OCI-LY7 (cell line): ENCODE measurements at regions of chr11 and their contacts with region 1.

Region 1: DNA sequence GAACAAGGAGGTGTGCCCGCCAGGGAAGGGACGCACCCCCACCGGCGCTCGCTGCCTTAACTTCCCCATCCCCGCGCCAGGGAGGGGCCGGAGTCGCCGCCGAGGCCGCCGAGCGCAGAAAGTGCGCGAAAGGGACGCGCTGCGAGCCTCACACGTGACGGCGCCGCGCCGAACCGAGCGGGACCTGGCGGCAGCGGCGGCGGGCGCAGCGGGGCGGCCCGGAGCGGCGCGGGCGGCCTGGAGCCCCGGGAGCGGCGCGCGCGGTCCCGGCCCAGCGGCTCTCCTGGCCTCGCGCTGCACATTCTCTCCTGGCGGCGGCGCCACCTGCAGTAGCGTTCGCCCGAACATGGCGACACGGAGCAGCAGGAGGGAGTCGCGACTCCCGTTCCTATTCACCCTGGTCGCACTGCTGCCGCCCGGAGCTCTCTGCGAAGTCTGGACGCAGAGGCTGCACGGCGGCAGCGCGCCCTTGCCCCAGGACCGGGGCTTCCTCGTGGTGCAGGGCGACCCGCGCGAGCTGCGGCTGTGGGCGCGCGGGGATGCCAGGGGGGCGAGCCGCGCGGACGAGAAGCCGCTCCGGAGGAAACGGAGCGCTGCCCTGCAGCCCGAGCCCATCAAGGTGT is at the start of gene SORL1:
- DNase-seq: peak; percentile 86
- H3K4me3 ChIP-seq: peak within 1 kb of the TSS; percentile 89
- H3K27ac ChIP-seq: peak within 1 kb of the TSS; percentile 97
- H3K4me1 ChIP-seq: peaks cover 73% of the 10 kb centered on the region
- CTCF ChIP-seq: peak; percentile 67
- total RNA-seq, gene SORL1: 219 and 228 TPM in 2 replicates

Region 2: DNA sequence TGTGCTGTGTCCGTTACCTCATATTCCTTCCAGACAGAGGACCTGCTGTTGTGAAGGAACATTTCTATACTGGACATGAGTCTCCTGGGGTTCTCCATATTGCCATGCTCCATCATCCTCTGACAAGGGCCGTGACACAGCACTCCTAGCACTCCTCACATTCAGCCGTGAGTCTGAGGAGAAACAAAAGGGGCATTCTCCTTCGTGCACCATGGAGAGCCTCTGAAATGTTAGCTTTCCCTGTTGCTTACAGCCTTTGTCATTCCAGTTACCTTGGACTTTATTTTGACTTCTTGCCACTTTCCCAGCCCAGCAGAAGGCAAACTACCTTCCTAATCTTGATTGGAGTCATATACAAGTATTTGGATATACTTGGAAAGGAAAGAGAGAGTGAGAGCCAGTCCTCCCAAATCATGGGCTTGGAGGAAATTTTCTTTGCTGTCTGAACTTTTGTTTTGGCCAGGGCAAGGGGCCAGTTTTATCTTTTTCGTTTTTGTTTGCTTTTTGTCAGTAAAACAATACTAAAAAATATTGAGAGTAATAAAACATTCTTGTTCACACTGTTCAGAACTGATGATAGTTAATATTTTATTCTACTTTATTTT is 380.1 kb before region 1 on chr11:
- CTCF ChIA-PET with region 1: no interaction called
- POLR2A ChIA-PET with region 1: no interaction called
- intact Hi-C with region 1: no loop called
- DNase-seq: no peak
- H3K4me3 ChIP-seq: no peak overlapping the region
- H3K27ac ChIP-seq: no peak overlapping the region
- H3K4me1 ChIP-seq: peaks cover 6% of the 10 kb centered on the region
- CTCF ChIP-seq: no peak

Region 3: DNA sequence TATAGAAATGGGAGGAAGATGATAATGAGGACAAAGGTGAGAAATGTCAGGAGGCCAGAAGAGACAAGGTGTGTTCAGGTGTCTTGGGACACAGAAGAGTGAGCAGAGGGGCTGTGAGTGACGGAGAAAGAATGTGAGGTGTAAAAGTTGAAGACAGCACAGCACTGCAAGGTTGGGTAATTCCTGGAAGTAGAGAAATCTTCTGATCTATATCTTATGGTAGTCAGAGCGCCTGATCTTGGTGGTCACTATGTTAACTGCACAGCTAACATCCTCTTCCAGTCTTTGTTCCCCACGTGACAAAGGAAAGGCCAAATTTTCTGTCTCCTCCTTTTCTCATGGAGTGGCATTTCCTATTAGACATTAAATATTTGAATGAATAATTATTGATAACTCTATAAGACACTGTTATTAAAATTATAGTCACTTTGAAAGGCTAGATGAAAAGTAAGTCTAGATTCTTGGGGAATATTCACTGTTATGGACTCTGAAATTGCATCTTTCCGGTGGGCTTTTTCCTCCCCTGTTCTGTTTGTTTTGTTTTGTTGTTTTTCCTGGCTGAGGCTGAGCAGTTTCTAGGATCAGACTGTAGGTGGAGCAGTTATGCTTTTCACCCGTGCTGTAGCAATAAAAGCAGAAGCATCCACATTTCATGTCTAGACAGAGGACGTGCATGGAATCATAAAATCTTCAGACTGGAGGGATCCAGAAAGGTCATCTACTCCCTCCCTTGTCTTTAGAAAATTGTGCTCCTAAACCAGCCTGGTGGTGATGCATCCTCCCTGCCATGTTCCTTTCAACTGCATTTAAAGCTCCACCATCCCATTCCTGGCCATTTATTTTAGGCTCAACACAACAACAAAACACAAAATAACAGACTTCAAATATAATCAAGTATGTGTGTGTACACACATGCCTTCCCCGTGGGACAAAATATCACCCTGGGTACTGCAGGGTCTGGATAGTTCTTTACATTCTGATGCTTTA is 133.0 kb before region 1 on chr11:
- CTCF ChIA-PET with region 1: no interaction called
- POLR2A ChIA-PET with region 1: interaction called, 4 read pairs
- intact Hi-C with region 1: loop called (anchors 1 kb)
- DNase-seq: peak; percentile 82
- H3K4me3 ChIP-seq: no peak overlapping the region
- H3K27ac ChIP-seq: peak overlapping the region; percentile 1
- H3K4me1 ChIP-seq: peaks cover 58% of the 10 kb centered on the region
- CTCF ChIP-seq: peak; percentile 99

Region 4: DNA sequence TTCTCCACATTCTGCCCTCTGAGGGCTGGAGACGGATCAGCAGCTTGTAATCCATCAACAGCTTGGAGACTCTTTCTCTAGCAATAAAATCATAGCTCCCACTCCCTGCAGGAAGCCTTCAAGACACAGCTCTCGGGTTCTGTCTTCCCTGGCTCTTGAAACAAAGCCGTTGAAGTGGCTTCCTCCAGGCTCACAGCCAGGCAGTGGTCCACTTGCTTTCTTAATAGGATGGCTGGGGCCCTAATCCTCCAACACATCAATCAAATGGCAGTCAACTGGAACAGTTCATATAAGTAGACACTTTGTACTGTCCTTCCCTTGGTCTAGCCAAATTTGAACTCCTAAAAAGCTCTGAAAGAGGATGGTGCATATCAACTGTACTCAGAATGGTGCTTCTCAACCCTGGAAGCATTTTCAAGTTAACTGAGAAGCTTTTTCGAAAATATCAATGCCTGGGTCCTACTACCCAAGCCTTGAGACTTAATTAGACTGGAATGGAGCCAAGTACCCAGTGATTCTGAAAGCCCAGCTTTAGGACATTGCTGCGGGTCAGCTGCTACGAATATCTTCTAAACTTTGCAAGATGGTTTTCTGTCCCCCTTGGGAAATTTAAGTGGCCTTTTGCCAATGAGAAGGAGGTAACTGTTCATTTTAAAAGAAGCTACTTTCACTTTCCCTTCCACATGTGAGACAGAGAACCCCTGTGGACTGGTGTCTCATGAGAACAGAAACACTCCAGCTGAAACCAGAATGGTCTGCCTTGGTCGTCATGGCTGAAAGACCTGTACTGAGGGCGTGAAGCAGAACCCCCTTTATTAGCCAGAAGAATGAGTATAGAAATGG is 84.9 kb before region 1 on chr11:
- CTCF ChIA-PET with region 1: no interaction called
- POLR2A ChIA-PET with region 1: interaction called, 153 read pairs
- intact Hi-C with region 1: loop called (anchors 1 kb)
- DNase-seq: peak; percentile 95
- H3K4me3 ChIP-seq: peak overlapping the region; percentile 35
- H3K27ac ChIP-seq: peak overlapping the region; percentile 98
- H3K4me1 ChIP-seq: peaks cover 86% of the 10 kb centered on the region
- CTCF ChIP-seq: 0 out of 2 replicates have a peak, but pooled peaks have one; percentile 14

Region 5: DNA sequence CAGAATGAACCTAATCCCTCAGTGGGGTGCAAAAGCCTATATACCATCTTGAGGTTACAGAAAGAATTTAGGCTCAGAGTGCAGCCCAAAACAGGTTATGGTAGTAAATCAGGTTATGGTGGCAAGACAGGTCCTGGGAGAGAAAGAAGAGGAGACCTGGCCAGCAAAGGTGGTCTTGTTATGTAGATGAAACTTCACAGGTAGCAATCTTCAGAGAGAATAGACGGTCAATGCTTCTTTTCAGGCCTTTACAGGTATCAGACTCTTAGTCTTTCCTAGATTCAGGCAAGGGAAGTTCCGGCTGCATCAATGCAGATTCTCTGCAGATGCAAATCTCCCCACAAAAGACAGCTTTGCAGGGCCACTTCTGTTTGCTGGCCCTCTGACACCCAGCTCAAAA is 45.8 kb before region 1 on chr11:
- CTCF ChIA-PET with region 1: no interaction called
- POLR2A ChIA-PET with region 1: interaction called, 20 read pairs
- intact Hi-C with region 1: no loop called
- DNase-seq: peak; percentile 75
- H3K4me3 ChIP-seq: peak overlapping the region; percentile 56
- H3K27ac ChIP-seq: peak overlapping the region; percentile 92
- H3K4me1 ChIP-seq: peaks cover 71% of the 10 kb centered on the region
- CTCF ChIP-seq: no peak

Region 6: GRCh38 chr11:121426476-121427399 is 25.4 kb before region 1 on chr11:
- CTCF ChIA-PET with region 1: interaction called, 4 read pairs
- POLR2A ChIA-PET with region 1: interaction called, 413 read pairs
- intact Hi-C with region 1: loop called (anchors 1 kb)
- DNase-seq: peak; percentile 84
- H3K4me3 ChIP-seq: peak overlapping the region; percentile 44
- H3K27ac ChIP-seq: peak overlapping the region; percentile 99
- H3K4me1 ChIP-seq: peaks cover 98% of the 10 kb centered on the region
- CTCF ChIP-seq: peak; percentile 67

Region 7: GRCh38 chr11:121464352-121464946 is 12.4 kb after region 1 on chr11:
- CTCF ChIA-PET with region 1: interaction called, 3 read pairs
- POLR2A ChIA-PET with region 1: interaction called, 23 read pairs
- intact Hi-C with region 1: no loop called
- DNase-seq: peak; percentile 66
- H3K4me3 ChIP-seq: peak overlapping the region; percentile 30
- H3K27ac ChIP-seq: peak overlapping the region; percentile 70
- H3K4me1 ChIP-seq: peaks cover 99% of the 10 kb centered on the region
- CTCF ChIP-seq: no peak

Region 8: DNA sequence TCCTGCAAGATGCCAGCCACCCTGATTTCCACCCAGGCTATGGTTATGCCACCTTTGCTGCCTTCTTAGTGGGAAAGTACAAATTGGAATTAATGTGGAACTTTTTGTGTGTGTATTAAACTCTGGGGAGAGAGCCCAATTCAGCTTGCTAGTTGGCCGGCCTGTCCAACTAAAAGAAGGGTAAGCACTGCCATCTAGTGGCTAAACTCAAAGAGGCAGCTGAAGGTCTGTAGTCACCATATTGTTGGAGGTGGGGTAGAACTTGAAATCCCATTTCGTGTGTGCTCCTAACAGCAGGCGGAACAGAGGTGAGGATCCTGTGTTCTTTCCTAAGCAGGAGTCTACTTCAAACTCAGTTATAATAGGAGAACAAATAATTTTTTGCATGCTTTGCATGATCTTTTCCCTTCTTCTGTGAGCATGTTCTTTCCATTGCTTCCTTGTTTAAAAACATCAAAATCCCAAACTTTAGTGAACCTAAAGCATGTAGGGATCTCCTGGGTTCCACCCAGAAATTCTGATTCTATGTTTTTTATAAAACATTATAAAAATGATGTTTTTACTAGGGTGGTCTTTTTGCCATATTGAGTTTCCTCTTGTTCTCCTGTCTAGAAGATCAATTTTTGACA is 139.4 kb after region 1 on chr11:
- CTCF ChIA-PET with region 1: no interaction called
- POLR2A ChIA-PET with region 1: interaction called, 3 read pairs
- intact Hi-C with region 1: loop called (anchors 1 kb)
- DNase-seq: peak; percentile 87
- H3K4me3 ChIP-seq: peak overlapping the region; percentile 66
- H3K27ac ChIP-seq: peak overlapping the region; percentile 98
- H3K4me1 ChIP-seq: peaks cover 69% of the 10 kb centered on the region
- CTCF ChIP-seq: peak; percentile 97